PC-3 (cell line): ENCODE measurements at regions of chr6 and their contacts with region 1.

Region 1: DNA sequence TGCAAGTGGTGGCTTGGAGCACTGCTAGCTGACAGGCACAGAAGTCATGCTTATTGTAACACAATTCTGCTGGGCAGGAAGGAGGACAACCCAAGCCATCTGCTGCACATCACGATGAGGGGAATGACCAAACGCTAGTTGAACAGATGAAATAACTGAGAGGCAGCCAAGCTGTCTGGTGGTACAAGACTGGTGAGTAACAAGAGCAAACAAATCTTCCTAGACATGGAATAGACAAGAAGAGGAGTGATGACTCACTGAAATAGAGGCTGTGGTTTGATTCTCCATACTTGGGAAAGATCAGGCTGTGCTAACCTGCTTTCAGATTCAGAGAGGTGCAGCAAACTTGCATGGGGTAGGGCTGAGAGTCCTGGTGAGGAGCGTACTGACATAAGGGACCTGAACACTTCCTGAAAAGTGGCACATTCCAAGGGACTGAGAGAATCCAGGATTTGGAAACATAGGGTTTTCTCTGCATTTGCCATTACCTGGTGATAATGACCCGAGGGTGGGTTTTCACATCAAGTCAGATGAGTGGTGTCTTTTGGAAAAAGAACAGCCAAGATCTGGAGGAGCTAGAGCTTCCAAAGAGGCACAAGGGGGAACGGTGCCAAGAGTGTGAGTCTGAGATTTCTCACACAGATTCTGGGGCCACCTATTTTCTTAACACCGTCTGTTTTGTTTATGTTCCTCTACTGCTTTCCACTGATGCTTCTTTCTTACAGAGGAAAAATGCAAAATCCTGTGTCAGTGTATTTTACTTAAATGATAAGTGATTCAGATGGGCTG is 60.0 kb downstream of the PRL start:
- DNase-seq: peak; percentile 97
- ATAC-seq: peak; percentile 90
- H3K4me3 ChIP-seq: peak overlapping the region; percentile 34; the same call in 1 of the 2 replicates
- H3K27ac ChIP-seq: peak overlapping the region; percentile 91
- H3K4me1 ChIP-seq: peaks cover 31% of the 10 kb centered on the region
- H3K27me3 ChIP-seq: no peaks in the 10 kb centered on the region
- CTCF ChIP-seq: no peak

Region 2: DNA sequence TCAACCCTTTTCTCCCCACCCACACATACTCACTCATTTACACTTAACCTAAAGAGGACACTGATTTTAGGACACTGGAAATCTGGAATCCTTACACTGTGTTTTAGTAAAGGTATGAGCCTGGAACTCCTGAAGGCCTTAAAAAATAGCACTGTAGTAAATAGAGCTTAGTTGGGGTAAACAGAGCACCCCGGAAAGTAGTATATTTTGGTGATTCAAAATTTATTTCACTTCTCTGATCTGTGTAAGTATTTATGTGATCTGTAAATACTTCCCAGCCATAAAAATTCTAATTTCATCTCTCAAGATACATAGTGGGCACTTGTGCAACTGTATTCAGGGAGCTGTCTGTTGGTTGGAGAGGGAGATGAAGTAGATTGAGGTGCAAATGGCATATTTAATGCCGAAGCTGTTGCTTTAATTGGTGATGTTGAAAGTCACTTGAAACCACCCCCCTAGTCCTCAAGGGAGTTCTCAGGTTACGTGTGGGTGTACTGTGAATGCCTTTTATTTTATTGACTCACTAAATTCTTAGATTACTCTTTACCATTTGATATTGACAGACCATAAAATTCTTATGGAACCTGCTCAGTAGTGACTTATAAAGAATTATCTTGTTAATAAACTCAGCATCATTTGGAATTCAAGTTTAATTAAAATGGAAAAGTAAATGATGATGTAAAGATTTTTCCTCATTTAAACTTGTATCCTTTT is 488.3 kb before region 1 on chr6:
- CTCF ChIA-PET with region 1: no interaction called
- POLR2A ChIA-PET with region 1: interaction called, 9 read pairs
- intact Hi-C with region 1: loop called (anchors 10 kb)
- DNase-seq: peak; percentile 76
- ATAC-seq: peak; percentile 62
- H3K4me3 ChIP-seq: no peak overlapping the region
- H3K27ac ChIP-seq: no peak overlapping the region
- H3K4me1 ChIP-seq: peaks cover 39% of the 10 kb centered on the region
- H3K27me3 ChIP-seq: no peaks in the 10 kb centered on the region
- CTCF ChIP-seq: no peak

Region 3: DNA sequence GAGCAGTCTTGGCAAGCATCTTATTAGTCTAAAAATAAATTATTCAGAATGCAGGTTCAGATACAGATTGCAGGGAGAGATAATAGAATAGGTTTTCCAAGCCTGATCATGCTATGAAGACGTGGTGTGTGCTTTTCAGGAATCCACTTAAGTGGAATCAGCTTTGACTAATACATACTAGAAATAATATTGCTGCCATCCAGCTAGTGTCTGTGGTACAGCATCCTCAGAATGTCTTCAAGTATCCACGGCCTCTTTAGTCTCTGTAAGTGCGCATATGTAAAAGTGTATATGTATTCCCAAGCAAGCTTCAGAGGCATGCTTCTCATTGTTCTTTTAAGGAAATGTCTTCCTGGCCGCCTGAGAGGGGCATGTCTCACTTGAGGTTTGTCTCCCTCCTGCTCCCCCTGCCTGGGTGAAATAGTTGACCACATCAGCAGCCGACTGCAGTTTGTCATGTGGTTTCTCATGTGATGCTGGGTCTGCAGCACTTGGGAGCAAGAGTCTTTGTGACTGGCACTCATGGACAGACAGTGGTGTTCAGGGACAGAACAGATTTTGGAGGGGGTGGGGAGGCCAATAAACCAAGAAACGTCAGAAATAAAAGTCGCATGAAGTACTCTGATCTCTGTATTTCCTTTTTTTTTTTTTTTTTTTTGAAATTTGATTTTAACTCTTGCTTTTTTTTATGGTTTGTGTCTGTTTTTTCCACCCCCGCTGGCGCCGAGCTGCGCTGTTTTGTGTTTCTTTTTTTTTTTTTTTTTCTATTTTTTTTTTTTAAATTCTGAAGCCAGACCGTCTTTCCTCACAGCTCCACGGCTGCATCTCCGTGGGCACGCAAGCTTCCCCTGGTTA is 90.8 kb before region 1 on chr6:
- CTCF ChIA-PET with region 1: no interaction called
- POLR2A ChIA-PET with region 1: no interaction called
- intact Hi-C with region 1: loop called (anchors 2 kb)
- DNase-seq: no peak
- ATAC-seq: no peak
- H3K4me3 ChIP-seq: no peak overlapping the region
- H3K27ac ChIP-seq: no peak overlapping the region
- H3K4me1 ChIP-seq: peaks cover 10% of the 10 kb centered on the region
- H3K27me3 ChIP-seq: no peaks in the 10 kb centered on the region
- CTCF ChIP-seq: no peak